Activated CD4-positive, alpha-beta T cell treated with anti-CD3 and anti-CD28 coated beads for 36 hours (primary cell): ENCODE measurements at regions of chr6 and their contacts with region 1.

Region 1: GRCh38 chr6:159104163-159104925 is 59.6 kb upstream of the TAGAP start:
- DNase-seq: peak; percentile 89
- ATAC-seq: peak; percentile 72
- H3K4me3 Mint-ChIP-seq: peak overlapping the region; percentile 10
- H3K27ac Mint-ChIP-seq: peak overlapping the region; percentile 87
- H3K4me1 Mint-ChIP-seq: peaks cover 79% of the 10 kb centered on the region
- H3K27me3 Mint-ChIP-seq: no peaks in the 10 kb centered on the region

Region 2: DNA sequence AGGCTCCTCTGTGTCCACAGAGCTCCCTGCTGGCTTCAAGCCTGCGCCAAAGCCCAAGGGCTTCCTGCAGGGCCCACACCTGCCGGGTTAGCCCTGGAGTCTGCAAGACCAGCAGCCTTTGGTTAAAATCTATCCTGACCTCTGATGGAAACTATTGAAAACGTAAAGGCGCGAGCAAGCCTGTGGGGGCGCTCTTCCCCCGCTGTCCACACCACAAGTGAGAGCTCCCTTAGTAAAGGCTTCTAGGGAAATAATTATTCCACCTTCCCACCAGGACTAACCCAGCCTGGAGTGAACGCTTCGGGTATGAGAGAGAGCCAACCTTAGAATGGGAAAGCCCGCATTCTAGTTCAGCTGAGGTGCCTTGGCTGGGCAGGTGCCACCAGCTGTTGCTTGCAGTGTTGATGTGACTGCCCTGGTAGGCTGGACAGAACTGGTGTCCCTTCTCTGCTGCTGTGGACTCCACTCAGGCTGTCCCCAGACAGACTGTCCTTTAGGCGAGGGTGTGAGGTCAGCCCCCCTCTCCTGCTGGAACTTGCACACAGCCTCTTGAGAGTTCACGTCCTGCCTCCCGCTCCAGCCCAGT is 385.8 kb before region 1 on chr6:
- CTCF ChIA-PET with region 1: no interaction called
- POLR2A ChIA-PET with region 1: no interaction called
- intact Hi-C with region 1: loop called in 1 of 2 experiments (anchors 5 kb)
- DNase-seq: no peak
- ATAC-seq: no peak
- H3K4me3 Mint-ChIP-seq: no peak overlapping the region
- H3K27ac Mint-ChIP-seq: no peak overlapping the region
- H3K4me1 Mint-ChIP-seq: peaks cover 42% of the 10 kb centered on the region
- H3K27me3 Mint-ChIP-seq: no peaks in the 10 kb centered on the region

Region 3: GRCh38 chr6:158869826-158870648 is 234.3 kb before region 1 on chr6:
- CTCF ChIA-PET with region 1: interaction called, 3 read pairs
- POLR2A ChIA-PET with region 1: no interaction called
- intact Hi-C with region 1: loop called in 1 of 2 experiments (anchors 2 kb)
- DNase-seq: peak; percentile 98
- ATAC-seq: peak; percentile 90
- H3K4me3 Mint-ChIP-seq: peak overlapping the region; percentile 75
- H3K27ac Mint-ChIP-seq: peak overlapping the region; percentile 95
- H3K4me1 Mint-ChIP-seq: peaks cover 37% of the 10 kb centered on the region
- H3K27me3 Mint-ChIP-seq: no peaks in the 10 kb centered on the region

Region 4: DNA sequence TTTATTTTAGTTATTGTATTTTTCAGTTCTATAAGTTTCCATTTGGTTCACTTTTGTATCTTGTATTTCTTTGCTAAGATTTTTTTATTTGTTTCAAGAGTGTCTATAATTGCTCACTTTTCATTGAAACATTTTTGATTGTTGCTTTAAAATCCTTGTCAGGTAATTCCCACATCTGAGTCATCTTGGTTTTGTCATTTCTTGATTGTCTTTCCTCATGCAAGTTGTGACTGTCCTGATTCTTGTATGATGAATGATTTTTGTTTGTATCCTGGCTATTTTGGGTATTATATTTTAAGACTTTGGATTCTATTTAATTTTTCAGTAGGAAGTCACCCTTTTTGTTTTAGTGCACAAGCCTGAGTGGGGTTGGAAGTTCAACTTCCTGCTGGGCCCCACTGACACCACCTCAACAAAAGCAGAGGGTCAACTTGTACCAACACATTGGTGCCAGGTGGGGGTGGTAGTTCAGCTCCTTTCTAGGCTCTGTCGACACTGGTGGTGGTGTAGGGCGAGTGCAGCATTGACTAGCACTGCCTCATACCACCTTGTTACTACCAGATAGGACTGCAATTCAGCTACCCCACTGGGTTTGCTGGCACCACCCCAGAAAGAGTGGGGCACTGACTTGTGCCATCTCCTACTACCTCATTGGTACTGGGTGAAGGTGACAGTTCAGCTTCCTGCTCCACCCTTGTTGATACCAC is 113.2 kb before region 1 on chr6:
- CTCF ChIA-PET with region 1: interaction called, 13 read pairs
- POLR2A ChIA-PET with region 1: no interaction called
- intact Hi-C with region 1: no loop called
- DNase-seq: peak; percentile 60
- ATAC-seq: peak; percentile 60
- H3K4me3 Mint-ChIP-seq: no peak overlapping the region
- H3K27ac Mint-ChIP-seq: peak overlapping the region; percentile 20
- H3K4me1 Mint-ChIP-seq: peaks cover 43% of the 10 kb centered on the region
- H3K27me3 Mint-ChIP-seq: no peaks in the 10 kb centered on the region

Region 5: DNA sequence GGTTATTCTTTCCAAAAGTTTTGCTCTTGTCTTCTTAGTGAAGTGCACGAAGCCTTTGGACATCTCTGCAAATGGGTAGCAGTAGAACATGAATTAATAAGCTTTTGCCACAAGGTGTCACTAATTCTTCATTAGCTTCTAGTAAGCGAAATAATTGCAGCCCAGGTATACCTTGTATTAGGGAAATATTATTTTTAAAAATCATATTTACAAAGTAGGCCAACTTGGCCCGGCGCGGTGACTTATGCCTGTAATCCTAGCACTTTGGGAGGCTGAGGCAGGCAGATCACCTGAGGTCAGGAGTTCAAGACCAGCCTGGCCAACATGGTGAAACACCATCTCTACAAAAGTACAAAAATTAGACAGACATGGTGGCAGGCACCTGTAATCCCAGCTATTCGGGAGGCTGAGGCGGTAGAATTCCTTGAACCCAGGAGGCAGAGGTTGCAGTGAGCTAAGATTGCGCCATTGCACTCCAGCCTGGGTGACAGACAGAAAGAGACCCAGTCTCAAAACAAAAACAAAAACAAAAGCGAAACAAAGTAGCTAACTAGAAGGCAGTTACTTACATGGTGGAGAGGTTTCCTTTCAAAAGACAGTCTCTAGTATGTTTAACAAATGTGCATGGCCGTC is 95.6 kb before region 1 on chr6:
- CTCF ChIA-PET with region 1: interaction called, 413 read pairs
- POLR2A ChIA-PET with region 1: interaction called, 6 read pairs
- intact Hi-C with region 1: loop called (anchors 1 kb)
- DNase-seq: no peak
- ATAC-seq: peak; percentile 74
- H3K4me3 Mint-ChIP-seq: peak overlapping the region; percentile 7
- H3K27ac Mint-ChIP-seq: no peak overlapping the region
- H3K4me1 Mint-ChIP-seq: peaks cover 36% of the 10 kb centered on the region
- H3K27me3 Mint-ChIP-seq: no peaks in the 10 kb centered on the region

Region 6: DNA sequence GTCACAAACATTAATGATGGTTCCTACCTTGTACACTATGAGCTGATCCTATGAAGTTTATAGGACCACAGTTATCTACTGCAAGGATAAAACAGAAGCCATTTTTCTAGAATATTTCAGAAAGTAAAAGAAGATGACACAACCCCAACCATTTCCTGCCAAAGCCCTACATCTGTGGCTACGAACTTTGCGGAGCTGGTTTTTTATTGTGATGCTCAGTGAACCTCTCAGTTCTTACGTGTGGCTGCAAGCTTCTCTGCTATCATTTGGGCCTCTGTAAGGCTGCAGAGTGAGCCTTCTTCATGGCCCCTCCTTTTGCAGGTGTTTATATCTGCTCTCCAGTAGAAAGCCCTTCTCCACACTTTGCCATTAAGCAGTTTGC is 41.8 kb before region 1 on chr6:
- CTCF ChIA-PET with region 1: interaction called, 13 read pairs
- POLR2A ChIA-PET with region 1: interaction called, 3 read pairs
- intact Hi-C with region 1: no loop called
- DNase-seq: peak; percentile 73
- ATAC-seq: peak; percentile 77
- H3K4me3 Mint-ChIP-seq: peak overlapping the region; percentile 35
- H3K27ac Mint-ChIP-seq: peak overlapping the region; percentile 94
- H3K4me1 Mint-ChIP-seq: peaks cover 99% of the 10 kb centered on the region
- H3K27me3 Mint-ChIP-seq: no peaks in the 10 kb centered on the region